Natural killer cell (primary cell): ENCODE measurements at regions of chr12 and their contacts with region 1.

Region 1: DNA sequence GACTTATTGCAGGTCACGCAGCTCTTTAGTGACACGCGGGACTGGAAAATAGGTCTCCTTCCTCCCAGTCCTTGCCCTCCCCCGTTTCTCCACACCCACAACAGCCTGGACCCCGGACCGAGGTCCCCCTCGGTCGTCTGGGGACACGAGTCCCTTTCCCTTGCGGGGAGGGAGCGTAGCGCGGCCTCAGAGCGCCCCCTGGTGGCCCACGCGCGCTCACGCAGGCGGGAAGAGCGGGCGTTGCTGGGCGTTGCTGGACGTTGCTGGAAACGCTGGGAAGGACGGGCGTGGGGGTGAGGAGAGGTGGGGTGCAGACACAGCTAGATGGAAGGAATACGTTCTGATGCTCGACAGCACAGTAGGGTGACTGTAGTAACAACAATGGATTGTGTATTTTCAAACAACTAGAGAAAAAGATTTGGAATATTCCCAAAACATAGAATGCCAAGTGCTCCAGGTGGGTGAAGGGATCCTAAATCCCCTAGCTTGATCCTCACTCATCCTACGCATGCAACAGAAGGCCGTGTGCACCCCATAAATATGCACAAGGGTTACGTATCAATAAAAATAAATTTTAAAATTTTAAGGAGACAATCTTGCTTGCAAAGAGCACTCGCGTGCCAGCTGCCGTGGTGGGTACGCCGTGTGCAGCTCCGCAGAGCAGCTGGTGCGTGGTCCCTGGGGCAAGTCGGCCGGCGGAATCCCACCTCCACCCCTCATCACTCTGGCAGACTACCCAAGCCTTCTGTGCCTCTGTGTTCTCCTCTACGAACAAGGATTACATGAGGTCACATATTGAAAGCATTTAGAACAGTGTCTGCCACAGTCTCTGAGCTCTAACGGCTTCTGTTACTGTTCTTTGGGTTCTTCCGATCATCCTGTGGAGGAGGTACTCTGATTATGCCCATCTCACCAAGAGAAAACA is 87.4 kb downstream of the B4GALNT3 start:
- DNase-seq: peak; percentile 76 to 84
- ATAC-seq: peak; percentile 79 to 96 (median 91)
- H3K4me3 ChIP-seq: no peak overlapping the region
- H3K4me3 Mint-ChIP-seq: no peak overlapping the region
- H3K27ac ChIP-seq: no peak overlapping the region
- H3K27ac Mint-ChIP-seq: peak overlapping the region in 1 of 2 donors; percentile 33
- H3K4me1 ChIP-seq: peaks cover 11% of the 10 kb centered on the region
- H3K4me1 Mint-ChIP-seq: peaks cover 20 to 42% of the 10 kb centered on the region in 2 donors
- H3K27me3 ChIP-seq: no peaks in the 10 kb centered on the region
- H3K27me3 Mint-ChIP-seq: peaks cover 4 to 7% of the 10 kb centered on the region in 2 donors
- CTCF ChIP-seq: peak; percentile 98

Region 2: GRCh38 chr12:442235-442884 is 104.8 kb before region 1 on chr12:
- intact Hi-C with region 1: loop called (anchors 1 kb)
- DNase-seq: peak; percentile 37 to 74
- ATAC-seq: peak in 2 of 3 donors; percentile 50
- H3K4me3 ChIP-seq: no peak overlapping the region
- H3K4me3 Mint-ChIP-seq: no peak overlapping the region
- H3K27ac ChIP-seq: no peak overlapping the region
- H3K27ac Mint-ChIP-seq: no peak overlapping the region
- H3K4me1 ChIP-seq: no peaks in the 10 kb centered on the region
- H3K4me1 Mint-ChIP-seq: no peaks in the 10 kb centered on the region
- H3K27me3 ChIP-seq: peaks cover under 1% of the 10 kb centered on the region
- H3K27me3 Mint-ChIP-seq: no peaks in the 10 kb centered on the region
- CTCF ChIP-seq: peak; percentile 88

Region 3: DNA sequence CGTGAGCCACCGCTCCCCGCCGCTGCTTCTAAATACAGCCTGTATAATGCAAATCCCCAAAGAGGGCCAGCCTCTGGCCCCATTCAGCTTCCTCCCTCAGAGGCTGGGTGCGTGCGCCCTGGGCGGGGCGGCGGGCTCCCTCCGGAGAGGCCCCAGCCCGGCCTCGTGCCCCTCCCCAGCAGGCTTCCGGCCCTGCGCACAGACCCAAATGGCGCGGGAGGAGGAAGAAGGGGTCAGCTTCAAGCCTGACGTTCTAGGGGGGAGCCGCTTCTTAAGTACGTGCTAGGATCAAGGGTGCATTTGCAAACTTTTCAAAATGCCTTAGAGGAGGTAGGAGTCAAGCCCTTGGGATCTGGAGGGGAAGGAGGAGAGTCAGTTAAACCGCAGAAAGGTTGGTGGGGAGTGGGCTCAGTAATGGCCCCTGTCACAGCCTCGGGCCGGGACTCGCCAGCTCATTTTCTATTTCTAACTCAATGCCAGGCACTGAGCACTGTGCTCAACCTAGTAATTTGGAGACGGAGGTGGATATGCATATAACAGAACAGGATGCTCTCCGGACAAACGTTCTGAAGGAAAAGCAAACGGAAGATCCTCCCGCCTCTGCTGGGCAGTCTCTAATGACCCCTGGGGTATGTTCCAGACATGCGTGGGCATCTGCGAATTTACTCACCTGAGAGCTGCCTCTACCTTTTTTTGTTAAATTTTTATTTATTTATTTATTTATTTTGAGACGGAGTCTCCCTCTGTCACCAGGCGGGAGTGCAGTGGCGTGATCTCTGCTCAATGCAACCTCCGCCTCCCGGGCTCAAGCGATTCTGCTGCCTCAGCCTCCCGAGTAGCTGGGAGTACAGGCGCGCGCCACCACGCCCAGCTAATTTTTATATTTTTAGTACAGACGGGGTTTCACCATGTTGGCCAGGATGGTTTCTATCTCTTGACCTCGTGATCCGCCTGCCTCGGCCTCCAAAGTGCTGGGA is 83.8 kb after region 1 on chr12:
- intact Hi-C with region 1: no loop called
- DNase-seq: peak in 1 of 2 donors; percentile 68
- ATAC-seq: peak in 2 of 3 donors; percentile 92 to 97
- H3K4me3 ChIP-seq: peak overlapping the region; percentile 45
- H3K4me3 Mint-ChIP-seq: no peak overlapping the region
- H3K27ac ChIP-seq: peak overlapping the region; percentile 68
- H3K27ac Mint-ChIP-seq: peak overlapping the region in 1 of 2 donors; percentile 96
- H3K4me1 ChIP-seq: no peaks in the 10 kb centered on the region
- H3K4me1 Mint-ChIP-seq: peaks cover 0 to 22% of the 10 kb centered on the region in 2 donors
- H3K27me3 ChIP-seq: no peaks in the 10 kb centered on the region
- H3K27me3 Mint-ChIP-seq: no peaks in the 10 kb centered on the region
- CTCF ChIP-seq: no peak